Activated B cell treated with CpG ODN at 0.5 μM for 24 hours (primary cell): ENCODE measurements at regions of chr1 and their contacts with region 1.

Region 1: GRCh38 chr1:194295685-194296084 is 1109.3 kb upstream of the B3GALT2 start:
- DNase-seq: no peak
- ATAC-seq: peak; percentile 98
- H3K4me3 Mint-ChIP-seq: no peak overlapping the region
- H3K27ac Mint-ChIP-seq: no peak overlapping the region
- H3K4me1 Mint-ChIP-seq: peaks cover 5% of the 10 kb centered on the region
- H3K27me3 Mint-ChIP-seq: peaks cover 3% of the 10 kb centered on the region
- CTCF ChIP-seq: peak; percentile 28

Region 2: DNA sequence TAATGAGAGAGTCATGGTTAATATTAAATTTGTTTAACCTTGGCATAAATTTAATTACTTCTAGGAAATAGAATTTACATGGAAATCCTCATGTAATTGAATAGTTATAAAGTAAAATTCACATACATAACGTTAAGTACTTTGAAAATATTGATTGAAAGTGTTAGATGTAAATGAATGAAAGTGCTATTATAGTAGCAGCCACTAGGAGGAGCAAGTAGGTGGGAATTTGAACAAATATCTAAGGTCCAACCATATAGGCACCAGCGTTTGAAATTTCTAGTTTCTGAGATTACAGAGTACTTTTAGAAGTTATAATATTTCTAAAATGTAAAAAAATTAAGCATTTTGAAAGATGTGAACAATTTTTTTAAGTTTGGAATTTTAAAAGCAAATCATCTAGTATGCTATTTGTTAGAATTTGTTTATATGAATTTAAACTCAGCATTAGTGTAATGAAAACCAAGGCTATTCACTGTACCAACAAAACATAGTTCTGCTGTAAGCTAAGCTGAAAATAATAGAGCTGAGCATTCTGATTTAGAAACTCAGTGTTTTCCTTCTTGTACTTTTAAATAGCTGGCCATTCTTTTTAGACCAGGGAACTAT is 1112.6 kb before region 1 on chr1:
- CTCF ChIA-PET with region 1: interaction called, 4 read pairs
- POLR2A ChIA-PET with region 1: no interaction called
- intact Hi-C with region 1: loop called (anchors 1 kb)
- DNase-seq: no peak
- ATAC-seq: peak; percentile 61
- H3K4me3 Mint-ChIP-seq: no peak overlapping the region
- H3K27ac Mint-ChIP-seq: no peak overlapping the region
- H3K4me1 Mint-ChIP-seq: peaks cover 24% of the 10 kb centered on the region
- H3K27me3 Mint-ChIP-seq: no peaks in the 10 kb centered on the region
- CTCF ChIP-seq: peak; percentile 83

Region 3: GRCh38 chr1:193256019-193256418 is 1039.7 kb before region 1 on chr1:
- CTCF ChIA-PET with region 1: no interaction called
- POLR2A ChIA-PET with region 1: no interaction called
- intact Hi-C with region 1: loop called (anchors 10 kb)
- DNase-seq: no peak
- ATAC-seq: no peak
- H3K4me3 Mint-ChIP-seq: no peak overlapping the region
- H3K27ac Mint-ChIP-seq: no peak overlapping the region
- H3K4me1 Mint-ChIP-seq: no peaks in the 10 kb centered on the region
- H3K27me3 Mint-ChIP-seq: no peaks in the 10 kb centered on the region
- CTCF ChIP-seq: no peak

Region 4: DNA sequence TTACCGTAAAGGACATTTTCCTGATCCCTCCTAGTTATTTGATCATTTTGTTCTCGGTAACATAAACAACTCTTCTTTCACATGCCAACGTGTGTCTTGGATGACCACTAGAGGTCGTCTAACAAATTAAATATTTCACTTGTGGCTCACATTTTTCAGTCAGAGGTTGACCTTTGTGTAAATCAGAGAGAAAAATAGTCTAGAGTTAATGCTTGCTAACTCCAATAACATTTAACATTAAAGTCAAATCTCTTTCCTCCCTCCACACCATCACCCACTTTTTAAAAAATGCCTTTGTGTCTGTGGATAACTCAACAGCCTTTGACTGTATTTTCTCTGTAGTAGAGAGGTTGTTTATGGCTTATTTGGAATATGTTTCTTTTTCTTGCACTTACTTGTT is 888.8 kb before region 1 on chr1:
- CTCF ChIA-PET with region 1: no interaction called
- POLR2A ChIA-PET with region 1: no interaction called
- intact Hi-C with region 1: loop called (anchors 1 kb)
- DNase-seq: no peak
- ATAC-seq: no peak
- H3K4me3 Mint-ChIP-seq: no peak overlapping the region
- H3K27ac Mint-ChIP-seq: no peak overlapping the region
- H3K4me1 Mint-ChIP-seq: peaks cover 4% of the 10 kb centered on the region
- H3K27me3 Mint-ChIP-seq: no peaks in the 10 kb centered on the region
- CTCF ChIP-seq: peak; percentile 57

Region 5: DNA sequence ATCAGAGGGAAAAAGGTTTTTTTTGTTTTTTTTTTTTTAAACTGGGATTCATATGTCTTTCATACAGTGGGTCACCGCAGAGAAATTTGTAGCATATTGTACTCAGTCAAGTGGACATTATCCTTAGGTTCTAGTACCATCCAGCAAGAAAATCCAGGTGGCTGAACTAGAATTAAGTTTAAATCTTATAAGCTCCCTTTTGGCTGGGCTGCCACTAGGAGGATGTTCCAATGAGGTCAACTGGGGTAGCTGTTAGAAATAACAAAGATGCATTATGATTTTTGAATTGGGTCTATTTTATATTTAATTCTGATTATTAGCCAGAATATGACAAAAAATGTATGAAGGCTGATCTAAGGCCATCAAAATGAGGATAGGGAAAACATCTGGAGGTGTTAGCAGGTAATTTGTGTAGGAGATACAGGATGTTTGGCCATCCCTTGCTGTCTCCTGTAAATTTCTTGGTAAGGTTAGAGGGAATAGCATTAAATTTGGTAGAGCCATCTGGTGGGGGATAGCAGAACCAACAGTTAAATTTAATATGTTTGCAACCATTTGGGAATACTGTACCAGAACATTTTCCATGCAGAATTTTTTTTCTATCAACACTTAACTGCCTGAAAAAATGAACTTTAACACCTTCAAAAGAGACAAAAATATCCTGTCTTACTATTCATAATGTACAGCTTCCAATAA is 540.8 kb before region 1 on chr1:
- CTCF ChIA-PET with region 1: no interaction called
- POLR2A ChIA-PET with region 1: no interaction called
- intact Hi-C with region 1: loop called (anchors 10 kb)
- DNase-seq: no peak
- ATAC-seq: no peak
- H3K4me3 Mint-ChIP-seq: no peak overlapping the region
- H3K27ac Mint-ChIP-seq: no peak overlapping the region
- H3K4me1 Mint-ChIP-seq: no peaks in the 10 kb centered on the region
- H3K27me3 Mint-ChIP-seq: no peaks in the 10 kb centered on the region
- CTCF ChIP-seq: no peak

Region 6: DNA sequence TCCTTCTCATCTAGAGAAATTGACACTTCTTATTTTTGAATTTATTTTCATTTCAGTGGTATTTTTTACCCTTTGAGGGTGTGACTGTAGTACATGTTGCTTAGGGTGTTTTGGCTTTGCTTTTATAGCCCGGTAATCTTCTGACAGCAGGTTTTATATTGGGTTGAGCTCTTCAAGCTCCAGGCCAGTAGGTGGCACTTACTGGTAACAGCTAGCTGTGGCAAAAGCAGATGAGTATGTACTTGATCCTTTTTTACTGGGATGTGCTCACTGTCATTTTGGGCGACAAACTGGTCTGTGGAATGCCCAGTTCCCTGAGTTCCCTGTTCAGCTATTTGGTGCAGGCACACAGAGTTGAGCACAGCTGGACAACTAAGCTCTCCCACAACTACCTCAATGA is 193.1 kb before region 1 on chr1:
- CTCF ChIA-PET with region 1: interaction called, 5 read pairs
- POLR2A ChIA-PET with region 1: no interaction called
- intact Hi-C with region 1: loop called (anchors 1 kb)
- DNase-seq: no peak
- ATAC-seq: no peak
- H3K4me3 Mint-ChIP-seq: no peak overlapping the region
- H3K27ac Mint-ChIP-seq: no peak overlapping the region
- H3K4me1 Mint-ChIP-seq: no peaks in the 10 kb centered on the region
- H3K27me3 Mint-ChIP-seq: no peaks in the 10 kb centered on the region
- CTCF ChIP-seq: no peak

Region 7: DNA sequence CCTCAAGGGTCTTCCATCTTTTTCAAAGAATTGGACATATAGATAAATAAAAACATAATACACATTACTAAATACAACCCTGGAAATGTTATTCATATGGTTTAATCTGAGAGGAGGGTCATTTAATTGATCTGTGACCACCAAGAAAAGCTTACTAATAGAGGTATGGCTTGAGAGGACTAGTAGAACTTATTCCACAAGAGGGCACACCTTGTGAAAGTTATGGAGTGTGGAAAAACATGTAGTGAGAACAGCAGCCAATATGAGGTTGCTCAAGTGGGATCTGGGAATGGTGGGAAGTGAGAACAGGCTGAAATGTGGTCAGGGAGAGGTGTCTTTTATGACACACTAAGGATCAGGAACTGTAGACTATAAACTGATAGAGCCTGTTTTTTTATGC is 135.7 kb before region 1 on chr1:
- CTCF ChIA-PET with region 1: no interaction called
- POLR2A ChIA-PET with region 1: no interaction called
- intact Hi-C with region 1: loop called (anchors 1 kb)
- DNase-seq: no peak
- ATAC-seq: no peak
- H3K4me3 Mint-ChIP-seq: no peak overlapping the region
- H3K27ac Mint-ChIP-seq: no peak overlapping the region
- H3K4me1 Mint-ChIP-seq: no peaks in the 10 kb centered on the region
- H3K27me3 Mint-ChIP-seq: peaks cover 2% of the 10 kb centered on the region
- CTCF ChIP-seq: no peak

Region 8: DNA sequence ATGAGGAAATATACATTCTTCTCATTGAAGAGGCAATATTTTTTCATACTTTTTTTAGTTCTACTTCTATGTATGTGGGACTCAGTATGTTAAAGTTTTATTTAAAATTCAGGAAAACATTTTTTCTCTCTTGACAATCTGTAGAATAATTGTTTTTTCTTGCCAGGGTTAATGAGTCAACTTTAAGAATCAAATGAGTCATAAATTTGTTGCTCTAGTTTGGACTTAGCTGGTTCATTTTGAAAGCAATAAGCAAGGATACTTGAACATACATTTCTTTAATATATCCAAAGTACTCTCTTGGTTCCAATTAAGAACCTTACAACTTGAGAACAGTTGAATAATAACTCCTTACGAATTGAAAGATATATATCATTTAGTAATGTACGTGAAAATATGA is 36.1 kb after region 1 on chr1:
- CTCF ChIA-PET with region 1: no interaction called
- POLR2A ChIA-PET with region 1: no interaction called
- intact Hi-C with region 1: no loop called
- DNase-seq: no peak
- ATAC-seq: no peak
- H3K4me3 Mint-ChIP-seq: no peak overlapping the region
- H3K27ac Mint-ChIP-seq: no peak overlapping the region
- H3K4me1 Mint-ChIP-seq: no peaks in the 10 kb centered on the region
- H3K27me3 Mint-ChIP-seq: no peaks in the 10 kb centered on the region
- CTCF ChIP-seq: no peak

Region 9: DNA sequence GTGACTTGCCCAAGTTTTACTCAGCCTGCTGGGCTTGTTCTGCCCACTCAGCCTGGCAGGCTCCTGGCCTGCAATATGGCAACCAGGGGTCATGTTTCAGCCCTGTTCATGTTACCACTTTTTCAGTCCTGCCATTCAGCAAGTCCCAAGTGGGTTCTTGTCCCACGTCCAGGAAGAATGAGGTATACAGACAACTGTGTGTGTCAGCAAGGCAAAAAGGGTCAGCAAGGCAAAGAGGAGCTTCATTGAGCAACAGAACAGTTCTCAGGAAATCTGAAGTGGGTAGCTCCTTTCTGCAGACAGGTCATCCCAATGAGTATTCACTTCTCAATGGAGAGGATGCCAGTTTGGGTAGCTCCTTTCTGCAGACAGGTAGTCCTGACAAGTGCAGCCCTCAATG is 124.0 kb after region 1 on chr1:
- CTCF ChIA-PET with region 1: no interaction called
- POLR2A ChIA-PET with region 1: no interaction called
- intact Hi-C with region 1: no loop called
- DNase-seq: no peak
- ATAC-seq: no peak
- H3K4me3 Mint-ChIP-seq: no peak overlapping the region
- H3K27ac Mint-ChIP-seq: no peak overlapping the region
- H3K4me1 Mint-ChIP-seq: no peaks in the 10 kb centered on the region
- H3K27me3 Mint-ChIP-seq: no peaks in the 10 kb centered on the region
- CTCF ChIP-seq: no peak